HCT116 (cell line): ENCODE measurements at regions of chr17 and their contacts with region 1.

Region 1: DNA sequence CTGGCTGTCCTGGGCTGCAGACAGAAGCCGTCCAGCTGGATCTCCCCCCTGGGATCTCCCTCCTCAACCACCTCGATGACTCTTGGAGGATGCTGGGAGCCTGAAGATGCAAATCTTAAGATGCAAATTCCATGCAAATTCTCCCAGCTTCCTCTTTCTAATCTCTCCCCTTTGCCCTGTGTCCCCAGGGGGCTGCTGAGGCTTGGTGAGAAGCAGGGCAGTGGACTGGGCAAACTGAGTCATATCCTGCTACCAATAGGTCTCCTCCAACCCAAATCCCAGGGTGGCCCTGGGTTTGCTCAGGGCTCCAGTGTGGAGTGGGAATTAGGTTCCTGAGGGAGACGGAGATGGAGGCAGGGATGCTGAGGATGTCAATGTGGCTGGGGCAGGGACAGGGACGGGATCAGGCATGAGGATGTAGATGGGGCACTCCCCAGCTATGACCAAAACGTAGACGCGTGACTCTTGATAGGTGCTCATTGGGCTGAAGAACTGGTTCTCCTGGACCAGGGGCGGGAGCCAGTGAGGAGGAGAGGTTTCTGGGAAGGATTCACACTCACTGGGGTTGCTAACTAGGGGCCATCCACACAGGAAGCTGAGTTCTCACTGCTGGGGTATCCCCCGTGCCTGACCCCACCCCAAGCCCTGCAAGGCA is 3.6 kb upstream of the ALOX12B start:
- DNase-seq: no peak
- ATAC-seq: no peak
- H3K4me3 ChIP-seq: no peak overlapping the region
- H3K27ac ChIP-seq: no peak overlapping the region
- H3K4me1 ChIP-seq: peaks cover 2 to 11% of the 10 kb centered on the region in 2 experiments; a peak in 2 of 4 replicates
- H3K27me3 ChIP-seq: no peaks in the 10 kb centered on the region
- CTCF ChIP-seq: no peak
- POLR2A ChIP-seq: no peak
- RAD21 ChIP-seq: no peak

Region 2: GRCh38 chr17:8073627-8074484 is 17.3 kb before region 1 on chr17:
- CTCF ChIA-PET with region 1: interaction called, 18 read pairs
- POLR2A ChIA-PET with region 1: interaction called, 7 read pairs
- RAD21 ChIA-PET with region 1: no interaction called
- intact Hi-C with region 1: no loop called
- DNase-seq: peak; percentile 44
- ATAC-seq: peak; percentile 96
- H3K4me3 ChIP-seq: peak overlapping the region; percentile 1 to 41; a peak in 3 of 4 replicates
- H3K27ac ChIP-seq: no peak overlapping the region
- H3K4me1 ChIP-seq: peaks cover 0 to 16% of the 10 kb centered on the region in 2 experiments; a peak in 2 of 4 replicates
- H3K27me3 ChIP-seq: peaks cover 4% of the 10 kb centered on the region; the same call in 1 of the 2 replicates
- CTCF ChIP-seq: peak; percentile 70 to 97 (median 92)
- POLR2A ChIP-seq: no peak
- RAD21 ChIP-seq: peak; percentile 58

Region 3: DNA sequence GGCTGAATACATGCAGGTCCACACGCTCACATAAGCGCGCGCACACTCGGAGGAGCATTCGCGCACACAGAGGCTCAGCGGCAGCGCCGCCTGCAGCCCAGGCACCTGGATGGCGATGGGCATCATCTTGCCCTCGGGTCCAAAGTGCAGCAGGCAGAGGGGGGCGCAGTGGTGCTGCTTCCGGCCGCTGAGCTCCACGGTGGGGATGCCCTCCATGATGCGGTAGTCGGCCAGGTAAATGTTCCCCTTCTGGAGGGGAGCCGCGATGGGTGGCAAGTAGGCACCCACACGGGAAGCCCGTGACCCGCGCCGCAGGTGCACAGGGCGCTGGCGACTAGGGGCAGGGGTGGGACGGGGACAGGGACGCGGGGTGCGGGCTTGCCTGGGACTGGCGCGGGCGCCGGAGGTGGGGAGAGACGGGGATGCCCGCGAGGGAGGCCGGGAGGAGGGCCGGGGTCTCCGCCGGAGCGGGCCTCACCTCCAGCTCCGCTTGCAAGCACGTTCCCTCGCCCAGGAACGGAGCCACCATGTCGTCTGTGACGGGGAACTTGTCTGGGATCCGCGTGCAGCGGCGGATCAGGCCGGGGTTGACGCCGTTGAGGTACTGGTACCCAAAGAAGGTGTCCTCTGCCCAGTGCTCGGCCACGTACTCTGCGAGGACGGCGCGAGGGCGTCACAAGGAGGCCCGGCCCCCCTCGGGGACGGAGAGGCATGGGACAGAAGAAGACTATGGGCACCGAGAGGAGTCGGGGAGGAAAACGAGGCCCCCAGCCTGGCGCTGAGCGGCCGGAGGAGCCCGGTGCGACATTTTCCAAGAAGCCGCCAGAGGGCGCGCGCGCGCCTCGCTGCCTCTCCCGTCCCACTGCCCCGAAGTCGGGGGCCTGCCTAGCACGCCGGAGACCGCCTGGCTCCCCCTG is 11.6 kb before region 1 on chr17:
- CTCF ChIA-PET with region 1: interaction called, 18 read pairs
- POLR2A ChIA-PET with region 1: interaction called, 7 read pairs
- RAD21 ChIA-PET with region 1: no interaction called
- intact Hi-C with region 1: no loop called
- DNase-seq: peak; percentile 72
- ATAC-seq: peak; percentile 88
- H3K4me3 ChIP-seq: peak overlapping the region; percentile 68 to 81
- H3K27ac ChIP-seq: peak overlapping the region; percentile 79
- H3K4me1 ChIP-seq: peaks cover 2 to 25% of the 10 kb centered on the region in 2 experiments; a peak in 3 of 4 replicates
- H3K27me3 ChIP-seq: no peaks in the 10 kb centered on the region
- CTCF ChIP-seq: peak; percentile 84 to 98 (median 86)
- POLR2A ChIP-seq: no peak
- RAD21 ChIP-seq: peak; percentile 79

Region 4: DNA sequence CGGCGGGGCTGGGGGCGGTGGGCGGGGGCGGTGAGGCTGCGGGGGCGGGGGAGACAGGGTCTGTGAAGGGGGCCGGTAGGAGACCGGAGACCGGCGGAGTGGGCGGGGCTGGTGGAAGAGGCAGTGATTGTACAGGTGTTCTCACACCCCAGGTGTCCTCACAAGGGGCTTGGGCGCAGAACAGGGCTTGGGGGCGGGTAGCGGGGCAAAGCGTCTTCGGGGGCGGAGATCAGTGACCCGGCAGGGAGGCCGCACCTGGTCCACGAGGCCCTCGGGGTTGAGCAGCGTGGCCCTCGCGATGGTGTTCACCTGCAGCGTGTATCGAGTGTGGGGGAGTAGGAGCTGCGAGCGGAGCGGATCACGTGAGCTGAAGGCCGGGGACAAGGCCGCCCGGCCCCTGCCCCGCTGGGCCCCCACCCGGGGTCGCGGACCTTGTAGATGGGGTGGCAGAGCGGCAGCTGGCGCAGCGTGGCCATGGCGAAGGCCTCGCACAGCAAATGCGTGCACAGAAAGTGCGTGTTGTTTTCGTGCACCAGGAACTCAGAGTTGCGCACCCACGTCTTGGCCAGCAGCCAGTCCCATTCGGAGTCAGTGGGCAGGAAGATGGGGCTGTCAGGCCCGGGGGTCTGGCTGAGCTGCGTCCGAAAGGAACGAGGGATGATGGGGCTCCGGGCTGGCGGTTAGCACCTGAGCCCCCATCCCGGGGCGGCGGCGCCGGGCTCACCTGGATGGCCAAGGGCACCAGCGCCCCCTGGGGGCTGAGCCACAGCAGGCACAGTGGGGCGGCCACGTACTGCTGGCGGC is 18.7 kb after region 1 on chr17:
- CTCF ChIA-PET with region 1: interaction called, 34 read pairs
- POLR2A ChIA-PET with region 1: no interaction called
- RAD21 ChIA-PET with region 1: no interaction called
- intact Hi-C with region 1: no loop called
- DNase-seq: no peak
- ATAC-seq: peak; percentile 99
- H3K4me3 ChIP-seq: no peak overlapping the region
- H3K27ac ChIP-seq: no peak overlapping the region
- H3K4me1 ChIP-seq: peaks cover 0 to 9% of the 10 kb centered on the region in 2 experiments; a peak in 2 of 4 replicates
- H3K27me3 ChIP-seq: no peaks in the 10 kb centered on the region
- CTCF ChIP-seq: peak; percentile 82 to 89 (median 88)
- POLR2A ChIP-seq: no peak
- RAD21 ChIP-seq: peak; percentile 84

Region 5: DNA sequence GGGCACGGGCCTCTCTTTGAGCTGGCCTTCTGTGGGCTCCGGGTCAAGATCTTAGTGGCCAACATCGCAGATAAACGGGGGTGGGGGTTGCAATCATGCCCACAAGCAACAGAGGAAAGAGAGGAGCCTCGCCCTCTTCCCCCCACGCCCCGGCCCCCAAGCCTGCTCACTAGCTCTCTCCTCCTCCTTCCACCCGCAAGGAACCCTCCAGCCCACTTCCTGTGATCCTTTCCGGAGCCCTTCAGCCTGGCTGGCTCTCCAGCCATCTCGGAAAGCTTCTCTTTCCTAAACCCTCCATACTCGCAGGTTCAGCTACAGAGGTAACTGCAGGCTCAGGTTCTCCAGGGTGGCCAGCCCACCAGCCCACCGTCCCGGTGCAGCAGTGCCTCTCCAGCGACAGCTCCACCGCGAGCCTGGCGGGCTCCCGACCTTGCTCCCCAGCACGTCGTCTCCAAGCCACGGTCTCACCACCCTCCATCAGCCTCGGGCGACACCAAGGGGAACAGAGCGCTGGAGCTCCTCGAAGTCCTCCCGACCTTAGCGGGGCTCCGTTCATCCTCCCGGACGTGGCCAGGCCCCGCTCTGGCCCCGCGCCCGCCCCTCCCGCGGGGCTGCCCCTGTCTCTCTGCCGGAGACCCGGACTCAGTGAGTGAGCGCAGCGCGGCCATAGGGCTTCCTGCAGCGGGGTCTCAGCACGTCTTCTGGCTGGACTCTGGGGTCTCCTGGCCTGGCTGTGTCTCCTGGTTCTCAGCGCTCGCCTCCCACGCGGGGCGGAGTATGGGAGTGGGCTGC is 235.5 kb after region 1 on chr17:
- CTCF ChIA-PET with region 1: no interaction called
- POLR2A ChIA-PET with region 1: no interaction called
- RAD21 ChIA-PET with region 1: no interaction called
- intact Hi-C with region 1: no loop called
- DNase-seq: no peak
- ATAC-seq: no peak
- H3K4me3 ChIP-seq: no peak overlapping the region
- H3K27ac ChIP-seq: no peak overlapping the region
- H3K4me1 ChIP-seq: no peaks in the 10 kb centered on the region
- H3K27me3 ChIP-seq: no peaks in the 10 kb centered on the region
- CTCF ChIP-seq: no peak
- POLR2A ChIP-seq: no peak
- RAD21 ChIP-seq: no peak